PC-3 (cell line): ENCODE measurements at regions of chr10 and their contacts with region 1.

Region 1: DNA sequence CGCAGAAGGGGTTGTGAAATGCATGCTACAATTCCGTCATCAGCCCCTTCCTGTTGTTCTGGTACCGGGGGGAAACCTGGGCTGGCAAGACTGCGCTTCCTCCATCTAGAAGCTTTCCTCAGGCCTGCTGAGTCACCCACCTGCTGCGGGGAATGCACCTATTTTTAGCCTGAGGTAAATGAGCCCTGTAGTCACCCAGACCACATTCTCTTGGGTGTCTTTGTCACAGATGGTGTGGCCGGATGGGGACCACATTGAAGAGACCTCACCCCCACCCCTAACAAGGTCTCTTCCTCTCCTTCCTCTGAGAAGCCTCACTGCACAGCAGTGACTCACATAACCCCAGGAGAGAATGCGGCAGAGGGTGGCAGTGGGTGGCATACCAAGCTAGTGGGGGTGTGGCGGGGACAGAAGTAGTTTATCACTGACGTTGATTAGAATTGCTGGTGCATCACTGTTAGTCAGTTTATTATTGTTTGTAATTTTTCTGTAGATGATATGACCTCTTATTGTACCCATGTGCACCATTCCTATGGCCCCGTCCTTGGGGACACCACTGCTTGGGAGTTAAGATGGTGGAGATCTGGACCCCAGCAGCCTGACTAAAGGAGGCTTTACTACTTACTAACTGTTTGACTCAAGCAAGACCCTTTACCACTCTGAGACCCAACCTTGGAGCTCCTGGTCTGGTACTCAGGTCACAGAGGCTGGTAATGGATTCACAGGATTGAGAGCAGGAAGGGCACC is 83.0 kb upstream of the DUSP5 start:
- DNase-seq: peak; percentile 96
- ATAC-seq: peak; percentile 58
- H3K4me3 ChIP-seq: no peak overlapping the region
- H3K27ac ChIP-seq: peak overlapping the region; percentile 96
- H3K4me1 ChIP-seq: peaks cover 61% of the 10 kb centered on the region
- H3K27me3 ChIP-seq: no peaks in the 10 kb centered on the region
- CTCF ChIP-seq: no peak

Region 2: DNA sequence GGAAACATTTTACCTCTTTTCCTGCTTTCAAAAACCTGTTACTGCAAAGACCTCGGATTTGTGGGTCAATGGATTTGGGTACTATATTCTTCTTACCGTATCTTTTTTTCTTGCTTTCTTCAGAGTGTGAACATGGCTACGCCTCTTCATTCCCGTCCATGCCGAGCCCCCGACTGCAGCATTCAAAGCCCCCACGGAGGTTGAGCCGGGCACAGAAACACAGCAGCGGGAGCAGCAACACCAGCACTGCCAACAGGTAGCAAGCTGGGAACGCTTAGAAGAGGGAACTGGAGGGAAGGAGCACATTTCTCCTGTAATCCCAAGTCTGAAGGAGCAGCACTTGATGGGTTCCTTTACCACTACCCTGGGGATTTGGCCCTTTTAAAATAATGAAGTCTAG is 186.7 kb before region 1 on chr10:
- CTCF ChIA-PET with region 1: no interaction called
- POLR2A ChIA-PET with region 1: no interaction called
- intact Hi-C with region 1: no loop called
- DNase-seq: no peak
- ATAC-seq: no peak
- H3K4me3 ChIP-seq: no peak overlapping the region
- H3K27ac ChIP-seq: no peak overlapping the region
- H3K4me1 ChIP-seq: 0 out of 2 replicates have a peak, but pooled peaks cover 4% of the 10 kb centered on the region
- H3K27me3 ChIP-seq: no peaks in the 10 kb centered on the region
- CTCF ChIP-seq: no peak

Region 3: DNA sequence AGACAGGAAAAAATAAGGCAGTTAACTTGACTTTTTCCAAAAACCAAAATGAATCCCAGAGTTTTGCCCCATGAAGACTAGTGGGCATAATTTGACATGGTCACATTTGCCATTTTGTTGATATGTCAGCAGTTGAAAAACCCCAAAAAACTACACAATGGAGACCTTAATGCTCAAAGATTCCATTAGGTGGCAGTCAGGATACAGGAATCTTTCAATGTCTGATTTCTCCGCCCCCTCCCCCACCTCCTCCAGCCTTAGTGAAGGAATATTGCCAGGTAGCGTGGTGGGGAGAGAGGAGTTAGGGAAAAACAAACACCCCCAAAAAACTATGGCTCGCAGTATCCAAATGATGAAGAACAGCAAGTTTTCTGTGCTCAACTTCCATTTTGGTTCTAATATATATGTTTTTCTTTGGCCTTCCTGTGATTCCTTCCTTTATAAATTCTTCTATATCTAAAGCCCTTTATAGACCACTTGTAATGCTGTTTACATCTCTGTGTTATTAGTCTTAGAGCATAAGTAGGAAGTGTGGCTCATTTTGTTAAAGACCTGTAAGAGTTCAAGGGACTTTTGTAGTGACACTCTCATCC is 103.3 kb before region 1 on chr10:
- CTCF ChIA-PET with region 1: no interaction called
- POLR2A ChIA-PET with region 1: no interaction called
- intact Hi-C with region 1: loop called (anchors 2 kb)
- DNase-seq: peak; percentile 76
- ATAC-seq: peak; percentile 65
- H3K4me3 ChIP-seq: no peak overlapping the region
- H3K27ac ChIP-seq: peak overlapping the region; percentile 35
- H3K4me1 ChIP-seq: peaks cover 27% of the 10 kb centered on the region
- H3K27me3 ChIP-seq: no peaks in the 10 kb centered on the region
- CTCF ChIP-seq: peak; percentile 73

Region 4: DNA sequence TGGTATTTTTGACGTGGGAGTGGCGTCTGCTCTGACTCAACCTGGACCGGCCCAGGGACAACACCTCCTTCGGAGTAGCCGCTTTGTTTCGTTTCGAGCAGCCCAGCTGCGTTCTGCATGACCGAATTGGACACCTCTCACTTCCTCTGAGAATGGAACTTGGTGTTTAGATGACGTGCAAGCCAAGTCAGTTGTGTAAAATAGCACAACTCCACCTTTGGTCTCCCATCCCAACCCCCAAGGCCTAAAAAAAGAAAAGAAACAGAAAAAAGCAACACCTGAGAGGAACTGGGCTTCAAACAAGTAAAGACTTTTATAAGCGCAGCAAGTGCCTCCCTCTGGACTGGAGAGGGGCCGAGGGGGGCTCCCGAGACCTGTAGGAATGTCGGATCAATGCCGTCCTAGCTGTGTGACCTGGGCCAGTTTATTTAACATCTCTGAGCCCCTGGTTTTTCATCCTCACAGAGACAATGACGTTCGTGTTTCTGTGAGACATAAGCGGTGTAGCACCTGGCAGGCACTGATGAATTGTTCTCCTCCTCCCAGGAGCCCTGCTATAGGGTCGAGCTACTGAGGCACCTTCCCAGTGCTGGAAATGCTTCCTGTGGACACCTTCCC is 58.0 kb before region 1 on chr10:
- CTCF ChIA-PET with region 1: interaction called, 4 read pairs
- POLR2A ChIA-PET with region 1: no interaction called
- intact Hi-C with region 1: loop called (anchors 1 kb)
- DNase-seq: peak; percentile 79
- ATAC-seq: peak; percentile 68
- H3K4me3 ChIP-seq: peak overlapping the region; percentile 46; the same call in 1 of the 2 replicates
- H3K27ac ChIP-seq: peak overlapping the region; percentile 95
- H3K4me1 ChIP-seq: peaks cover 61% of the 10 kb centered on the region
- H3K27me3 ChIP-seq: no peaks in the 10 kb centered on the region
- CTCF ChIP-seq: no peak

Region 5: GRCh38 chr10:110398419-110399162 is 16.1 kb before region 1 on chr10:
- CTCF ChIA-PET with region 1: no interaction called
- POLR2A ChIA-PET with region 1: interaction called, 8 read pairs
- intact Hi-C with region 1: loop called (anchors 2 kb)
- DNase-seq: peak; percentile 96
- ATAC-seq: peak; percentile 82
- H3K4me3 ChIP-seq: peak overlapping the region; percentile 41
- H3K27ac ChIP-seq: peak overlapping the region; percentile 98
- H3K4me1 ChIP-seq: peaks cover 52% of the 10 kb centered on the region
- H3K27me3 ChIP-seq: no peaks in the 10 kb centered on the region
- CTCF ChIP-seq: no peak

Region 6: DNA sequence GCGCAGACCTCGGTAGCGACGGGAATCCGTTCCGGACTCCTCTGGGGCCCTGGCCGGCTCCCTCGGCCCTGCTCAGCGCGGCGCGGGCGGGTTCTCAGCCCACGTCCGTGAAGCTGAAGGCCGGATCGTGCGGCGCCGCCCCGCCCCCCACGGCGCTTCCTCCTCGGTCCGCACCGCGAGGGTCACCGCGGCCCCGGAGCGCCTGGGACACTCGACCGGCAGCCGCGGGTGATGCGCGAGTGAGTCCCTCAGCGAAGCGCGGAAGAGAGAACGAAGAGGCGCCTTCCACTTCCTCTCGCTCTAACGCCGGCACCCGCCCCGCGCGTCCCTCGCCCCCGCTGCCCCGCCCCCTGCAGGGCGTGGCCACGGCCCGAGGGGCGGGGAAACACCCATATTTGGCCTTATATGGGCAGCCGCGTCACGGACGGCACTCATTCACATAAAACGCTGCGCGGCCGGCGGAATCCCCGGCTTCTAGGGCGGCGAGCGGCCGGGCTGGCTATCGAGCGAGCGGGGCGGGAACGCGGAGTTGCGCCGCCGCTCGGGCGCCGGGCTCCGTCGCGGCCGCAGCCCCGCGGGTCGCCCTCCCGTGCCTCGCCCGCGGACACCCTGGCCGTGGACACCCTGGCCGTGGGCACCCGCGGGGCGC is 82.8 kb after region 1 on chr10 and contains the start of gene DUSP5:
- CTCF ChIA-PET with region 1: no interaction called
- POLR2A ChIA-PET with region 1: interaction called, 6 read pairs
- intact Hi-C with region 1: loop called (anchors 2 kb)
- DNase-seq: peak; percentile 95
- ATAC-seq: peak; percentile 34
- H3K4me3 ChIP-seq: peak within 1 kb of the TSS; percentile 96
- H3K27ac ChIP-seq: peak within 1 kb of the TSS; percentile 80
- H3K4me1 ChIP-seq: peaks cover 38% of the 10 kb centered on the region
- H3K27me3 ChIP-seq: no peaks in the 10 kb centered on the region
- CTCF ChIP-seq: no peak
- total RNA-seq, gene DUSP5: 205 and 206 TPM in 2 replicates

Region 7: DNA sequence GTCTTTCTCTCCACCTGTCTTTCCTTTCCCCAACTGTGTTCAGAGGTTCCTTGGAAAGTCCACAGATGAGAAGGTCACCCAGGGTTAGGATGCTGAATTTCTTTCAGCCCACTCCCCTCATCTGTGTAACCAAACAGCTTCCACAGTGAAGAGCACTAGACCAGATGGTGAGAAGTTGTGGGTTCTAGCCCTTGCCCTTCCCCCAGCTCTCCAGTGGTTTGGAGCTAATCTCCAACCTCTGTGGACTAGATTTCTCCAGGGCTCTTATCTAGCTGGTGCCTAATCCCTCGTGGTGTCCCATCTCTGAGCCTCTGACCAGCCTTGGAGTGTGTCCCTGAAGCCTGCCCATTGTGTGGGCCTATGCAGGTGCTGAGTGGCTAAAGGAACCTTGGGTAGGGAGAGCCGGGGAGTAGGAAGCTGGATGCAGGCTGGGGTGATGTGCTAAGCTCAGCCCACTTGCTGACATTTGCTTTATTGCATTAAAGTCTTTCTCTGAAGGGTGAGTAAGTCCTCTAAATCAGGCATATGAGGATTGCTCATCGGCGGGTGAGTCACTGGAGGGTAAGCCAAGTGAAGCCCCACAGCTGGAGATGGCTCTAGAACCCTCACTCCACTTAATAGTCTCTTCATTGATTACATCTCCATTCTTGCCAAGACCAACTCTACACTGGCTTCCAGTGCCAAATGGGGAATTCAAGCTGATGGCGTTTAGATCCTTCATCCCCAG is 97.9 kb after region 1 on chr10:
- CTCF ChIA-PET with region 1: no interaction called
- POLR2A ChIA-PET with region 1: interaction called, 15 read pairs
- intact Hi-C with region 1: no loop called
- DNase-seq: peak; percentile 80
- ATAC-seq: peak; percentile 45
- H3K4me3 ChIP-seq: no peak overlapping the region
- H3K27ac ChIP-seq: peak overlapping the region; percentile 60
- H3K4me1 ChIP-seq: peaks cover 21% of the 10 kb centered on the region; the same call in 1 of the 2 replicates
- H3K27me3 ChIP-seq: no peaks in the 10 kb centered on the region
- CTCF ChIP-seq: no peak

Region 8: GRCh38 chr10:110567201-110568054 is 152.7 kb after region 1 on chr10 and contains the start of gene SMC3:
- CTCF ChIA-PET with region 1: no interaction called
- POLR2A ChIA-PET with region 1: no interaction called
- intact Hi-C with region 1: loop called (anchors 5 kb)
- DNase-seq: peak; percentile 85
- ATAC-seq: peak; percentile 89
- H3K4me3 ChIP-seq: peak within 1 kb of the TSS; percentile 91
- H3K27ac ChIP-seq: peak within 1 kb of the TSS; percentile 74
- H3K4me1 ChIP-seq: peaks cover 15% of the 10 kb centered on the region
- H3K27me3 ChIP-seq: no peaks in the 10 kb centered on the region
- CTCF ChIP-seq: no peak
- total RNA-seq, gene SMC3: 18.4 and 20.3 TPM in 2 replicates